CD14-positive monocyte (primary cell): ENCODE measurements at regions of chr2 and their contacts with region 1.

Region 1: DNA sequence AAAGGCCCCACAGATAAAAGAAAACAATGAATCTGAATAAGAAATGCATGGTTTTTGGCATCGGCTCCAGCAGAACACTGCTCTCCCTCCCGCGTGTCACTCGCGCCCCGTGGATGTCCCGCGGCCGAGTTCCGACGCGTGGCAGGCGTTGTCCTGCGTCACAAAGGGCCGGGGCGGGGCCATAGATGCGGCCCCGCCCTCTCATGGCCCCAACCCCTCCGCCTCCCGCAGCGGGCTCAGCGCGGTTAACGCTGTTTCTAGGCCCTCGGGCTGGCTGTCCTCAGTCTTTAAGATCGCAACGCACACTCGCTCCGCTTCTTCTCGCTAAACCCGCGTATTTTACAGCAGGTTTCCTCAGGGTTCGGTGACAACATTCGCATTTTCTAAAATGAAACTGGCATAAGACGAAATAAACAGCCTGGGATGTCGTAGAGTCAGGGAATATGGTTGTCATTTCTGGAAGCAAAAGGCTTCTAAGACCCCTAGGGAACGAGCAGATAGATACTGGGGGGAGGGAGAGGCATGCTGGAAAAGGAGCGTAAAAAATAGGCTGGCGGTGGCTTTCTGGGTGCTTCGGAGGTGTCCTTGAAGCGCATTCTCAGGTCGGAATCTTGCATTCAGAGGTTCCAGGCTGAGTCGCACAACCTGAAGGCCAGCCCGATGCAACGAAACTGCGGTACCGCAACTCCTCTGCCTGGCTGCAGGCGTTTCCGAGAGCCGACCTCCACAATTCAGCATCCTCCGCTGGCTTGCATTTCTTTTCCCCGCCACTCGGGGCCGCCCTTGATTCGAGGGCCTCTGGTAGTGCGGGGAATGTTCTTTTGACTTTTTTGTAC is at the start of gene FKBP7:
- DNase-seq: peak; percentile 79 to 81 (median 80)
- H3K4me3 ChIP-seq: peak within 1 kb of the TSS; percentile 80 to 98 (median 92)
- H3K4me3 Mint-ChIP-seq: peak within 1 kb of the TSS; percentile 95 to 98
- H3K27ac ChIP-seq: peak within 1 kb of the TSS; percentile 90 to 99
- H3K27ac Mint-ChIP-seq: peak within 1 kb of the TSS; percentile 97 to 100 (median 99)
- H3K4me1 ChIP-seq: peaks cover 33 to 39% of the 10 kb centered on the region in 2 donors
- H3K4me1 Mint-ChIP-seq: peaks cover 34% of the 10 kb centered on the region
- H3K27me3 ChIP-seq: no peaks in the 10 kb centered on the region
- H3K27me3 Mint-ChIP-seq: no peaks in the 10 kb centered on the region
- CTCF ChIP-seq: peak; percentile 91
- polyA plus RNA-seq, gene FKBP7: 0.25 to 1.6 (median 0.57) TPM

Region 2: DNA sequence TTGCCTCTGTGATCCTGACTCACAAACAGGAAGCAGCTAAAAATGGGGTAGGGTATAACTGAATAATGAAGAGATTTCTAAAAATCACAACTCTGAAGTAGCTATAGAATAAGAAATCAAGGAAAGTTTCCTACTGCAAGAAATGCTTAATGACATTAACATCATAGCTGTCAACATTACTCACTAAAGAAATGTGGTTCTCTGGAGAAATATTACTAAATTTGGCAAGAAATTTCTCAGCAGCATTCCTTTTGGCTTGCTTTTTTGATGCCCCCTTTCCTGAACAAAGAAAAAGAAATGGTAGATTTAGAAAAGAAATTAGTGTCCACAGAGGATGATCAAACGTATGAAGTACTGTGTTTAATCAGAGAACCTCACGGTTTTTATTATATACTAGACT is 37.2 kb before region 1 on chr2:
- intact Hi-C with region 1: loop called in 1 of 2 experiments (anchors 5 kb)
- DNase-seq: no peak
- H3K4me3 ChIP-seq: no peak overlapping the region
- H3K4me3 Mint-ChIP-seq: no peak overlapping the region
- H3K27ac ChIP-seq: no peak overlapping the region
- H3K27ac Mint-ChIP-seq: no peak overlapping the region
- H3K4me1 ChIP-seq: no peaks in the 10 kb centered on the region
- H3K4me1 Mint-ChIP-seq: no peaks in the 10 kb centered on the region
- H3K27me3 ChIP-seq: no peaks in the 10 kb centered on the region
- H3K27me3 Mint-ChIP-seq: no peaks in the 10 kb centered on the region
- CTCF ChIP-seq: no peak

Region 3: DNA sequence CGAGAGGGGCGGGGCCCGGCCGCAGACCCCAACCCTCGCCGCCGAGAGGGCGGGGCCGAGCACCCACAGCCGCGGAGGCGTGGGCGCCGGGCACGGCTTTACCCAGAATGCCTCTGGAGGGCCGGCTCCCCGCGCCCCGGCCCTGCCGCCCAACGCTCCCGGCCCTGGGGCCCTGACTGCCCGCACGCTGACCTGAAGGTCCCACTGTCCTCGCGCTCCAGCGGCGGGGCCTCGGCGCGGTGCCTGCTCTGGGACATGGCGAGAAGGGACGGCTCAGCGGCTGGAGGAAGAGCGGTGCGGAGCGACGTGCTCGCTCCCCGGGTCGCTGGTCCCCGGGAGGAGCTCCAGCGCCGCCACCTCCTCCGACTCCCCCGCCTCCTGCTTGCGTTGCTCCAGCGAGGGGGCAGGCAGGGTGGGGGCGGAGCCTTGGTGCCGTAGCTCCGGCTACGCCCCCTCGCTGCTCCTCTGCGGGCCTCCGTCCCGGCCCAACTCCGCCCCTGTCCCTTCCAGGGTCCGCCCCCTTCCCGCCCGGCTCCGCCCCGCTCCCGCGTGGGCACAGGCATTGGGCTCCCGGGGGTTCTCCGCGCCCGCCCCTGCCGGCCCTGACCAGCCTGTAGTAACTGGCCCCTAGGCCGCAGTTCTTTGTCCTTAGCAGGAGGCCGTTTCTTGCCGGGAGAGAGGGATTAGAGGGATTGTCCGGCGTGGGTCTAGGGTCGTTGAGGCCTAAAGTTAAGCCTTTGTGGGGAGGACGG is 27.7 kb before region 1 on chr2 and contains the starts of genes PJVK and PRKRA:
- intact Hi-C with region 1: loop called in 1 of 2 experiments (anchors 1 kb)
- DNase-seq: peak; percentile 93 to 97 (median 94)
- H3K4me3 ChIP-seq: peak within 1 kb of the TSS; percentile 82 to 91 (median 85)
- H3K4me3 Mint-ChIP-seq: peak within 1 kb of the TSS; percentile 91 to 93
- H3K27ac ChIP-seq: peak within 1 kb of the TSS; percentile 71 to 85
- H3K27ac Mint-ChIP-seq: peak within 1 kb of the TSS; percentile 85 to 97 (median 93)
- H3K4me1 ChIP-seq: peaks cover 16 to 26% of the 10 kb centered on the region in 2 donors
- H3K4me1 Mint-ChIP-seq: peaks cover 21% of the 10 kb centered on the region
- H3K27me3 ChIP-seq: no peaks in the 10 kb centered on the region
- H3K27me3 Mint-ChIP-seq: no peaks in the 10 kb centered on the region
- CTCF ChIP-seq: no peak
- polyA plus RNA-seq, gene PJVK: 1.4 TPM in 1 of 3 donors, not detected in the others
- polyA plus RNA-seq, gene PRKRA: 21.0 to 35.8 (median 35.4) TPM

Region 4: DNA sequence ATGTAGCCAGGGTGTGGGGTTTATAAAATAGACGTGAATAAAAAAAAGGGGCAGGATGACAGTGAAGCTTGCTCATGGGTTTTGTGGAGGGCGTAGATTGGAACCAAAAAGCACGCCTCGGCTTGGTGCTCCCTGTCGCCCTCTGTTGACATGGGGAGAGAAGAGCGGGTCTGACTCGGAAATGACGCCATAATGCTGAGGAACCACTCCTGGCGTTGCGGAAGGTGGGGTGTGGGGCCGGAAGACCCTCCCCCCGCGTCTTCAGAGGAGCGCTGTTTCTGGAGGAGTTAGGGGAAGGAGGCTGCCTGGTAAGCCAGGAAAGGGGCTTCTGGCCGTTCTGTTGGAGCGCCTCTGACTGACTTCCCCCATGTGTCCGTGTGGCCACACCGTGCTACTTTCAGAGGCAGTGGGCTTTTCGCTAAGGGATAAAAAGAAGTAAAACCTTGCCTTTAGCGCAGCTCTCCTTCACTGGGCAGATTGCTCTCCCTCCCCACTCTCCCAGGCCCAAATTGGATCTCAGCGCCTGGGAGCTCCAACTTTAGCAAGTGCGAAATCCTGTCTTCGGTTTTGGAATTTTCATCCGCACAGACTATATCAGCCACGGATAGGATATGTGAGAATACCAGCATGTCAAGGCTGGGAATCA is 44.4 kb after region 1 on chr2:
- intact Hi-C with region 1: loop called in 1 of 2 experiments (anchors 5 kb)
- DNase-seq: peak; percentile 82 to 90 (median 86)
- H3K4me3 ChIP-seq: peak overlapping the region; percentile 68 to 95 (median 83)
- H3K4me3 Mint-ChIP-seq: peak overlapping the region; percentile 89 to 97
- H3K27ac ChIP-seq: peak overlapping the region; percentile 68 to 90
- H3K27ac Mint-ChIP-seq: peak overlapping the region; percentile 87 to 96 (median 93)
- H3K4me1 ChIP-seq: peaks cover 9 to 14% of the 10 kb centered on the region in 2 donors
- H3K4me1 Mint-ChIP-seq: peaks cover 33% of the 10 kb centered on the region
- H3K27me3 ChIP-seq: no peaks in the 10 kb centered on the region
- H3K27me3 Mint-ChIP-seq: no peaks in the 10 kb centered on the region
- CTCF ChIP-seq: peak; percentile 81